Posterior vena cava (tissue), 2 donors: ENCODE measurements at regions of chr11 and their contacts with region 1.

Region 1: GRCh38 chr11:45405916-45406670 is 120.0 kb upstream of the SYT13 start:
- DNase-seq: peak; percentile 35

Region 2: GRCh38 chr11:45423475-45424120 is 17.5 kb after region 1 on chr11:
- intact Hi-C with region 1: loop called in 1 of 2 experiments (anchors 1 kb)
- DNase-seq: peak; percentile 32

Region 3: GRCh38 chr11:45473341-45473895 is 67.3 kb after region 1 on chr11:
- intact Hi-C with region 1: no loop called
- DNase-seq: no peak